Heart right ventricle (tissue), 16 donors: ENCODE measurements at regions of chr22 and their contacts with region 1.

Region 1: DNA sequence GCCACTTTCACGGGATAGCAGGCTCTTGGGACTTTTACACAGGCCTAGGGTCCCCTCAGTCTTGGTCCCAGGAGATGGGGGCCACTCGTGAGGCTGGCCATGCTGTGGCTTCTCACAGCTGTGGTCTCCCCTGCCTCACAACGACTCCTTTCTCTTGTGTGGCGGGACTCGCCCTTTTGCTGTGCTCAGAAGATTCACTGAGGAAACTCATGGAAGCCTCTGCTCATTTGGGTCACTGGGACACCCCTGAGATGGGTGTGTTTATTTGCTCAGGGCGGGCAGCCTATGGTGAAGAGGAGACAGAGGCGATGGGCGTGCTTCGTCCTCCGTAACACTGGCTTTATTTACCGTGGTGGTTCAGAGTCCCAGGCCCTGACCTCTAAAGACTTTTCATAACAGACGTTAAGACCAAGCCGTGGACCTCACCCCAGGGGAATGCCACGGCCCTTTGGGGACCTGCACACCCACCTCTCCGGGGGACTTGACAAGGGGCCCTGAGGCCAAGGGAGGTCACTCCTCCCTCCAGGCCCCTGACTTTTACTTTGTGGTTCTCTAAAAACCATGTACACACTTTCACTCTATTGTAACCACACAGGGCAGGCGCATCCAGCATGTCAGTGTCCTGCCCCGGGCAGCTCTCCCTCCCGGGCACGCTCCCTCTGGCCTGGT is 15.5 kb downstream of the TEF start:
- DNase-seq: no peak
- ATAC-seq: no peak
- H3K4me3 ChIP-seq: no peak overlapping the region
- H3K27ac ChIP-seq: no peak overlapping the region
- H3K4me1 ChIP-seq: peaks cover 0 to 35% (median 19%) of the 10 kb centered on the region in 9 donors
- H3K27me3 ChIP-seq: no peaks in the 10 kb centered on the region
- CTCF ChIP-seq: no peak

Region 2: GRCh38 chr22:41327124-41327523 is 70.2 kb before region 1 on chr22:
- intact Hi-C with region 1: no loop called
- DNase-seq: no peak
- ATAC-seq: peak in 6 of 8 donors; percentile 39 to 67 (median 57)
- H3K4me3 ChIP-seq: no peak overlapping the region
- H3K27ac ChIP-seq: peak overlapping the region in 1 of 10 donors; percentile 10
- H3K4me1 ChIP-seq: no peaks in the 10 kb centered on the region
- H3K27me3 ChIP-seq: no peaks in the 10 kb centered on the region
- CTCF ChIP-seq: no peak

Region 3: GRCh38 chr22:41589391-41590241 is 192.3 kb after region 1 on chr22 and contains the start of gene PMM1:
- intact Hi-C with region 1: loop called in 1 of 10 experiments (anchors 10 kb)
- DNase-seq: peak; percentile 100
- ATAC-seq: peak; percentile 98 to 100 (median 99)
- H3K4me3 ChIP-seq: peak within 1 kb of the TSS; percentile 68 to 97 (median 92)
- H3K27ac ChIP-seq: peak within 1 kb of the TSS in 9 of 10 donors; percentile 58 to 90 (median 78)
- H3K4me1 ChIP-seq: peaks cover 4 to 27% (median 19%) of the 10 kb centered on the region in 9 donors
- H3K27me3 ChIP-seq: no peaks in the 10 kb centered on the region
- CTCF ChIP-seq: no peak
- total RNA-seq, gene PMM1: 13.8 to 26.6 (median 21.9) TPM